ENCODE measurements at regions of chr12 and their contacts with region 1.

Region 1: DNA sequence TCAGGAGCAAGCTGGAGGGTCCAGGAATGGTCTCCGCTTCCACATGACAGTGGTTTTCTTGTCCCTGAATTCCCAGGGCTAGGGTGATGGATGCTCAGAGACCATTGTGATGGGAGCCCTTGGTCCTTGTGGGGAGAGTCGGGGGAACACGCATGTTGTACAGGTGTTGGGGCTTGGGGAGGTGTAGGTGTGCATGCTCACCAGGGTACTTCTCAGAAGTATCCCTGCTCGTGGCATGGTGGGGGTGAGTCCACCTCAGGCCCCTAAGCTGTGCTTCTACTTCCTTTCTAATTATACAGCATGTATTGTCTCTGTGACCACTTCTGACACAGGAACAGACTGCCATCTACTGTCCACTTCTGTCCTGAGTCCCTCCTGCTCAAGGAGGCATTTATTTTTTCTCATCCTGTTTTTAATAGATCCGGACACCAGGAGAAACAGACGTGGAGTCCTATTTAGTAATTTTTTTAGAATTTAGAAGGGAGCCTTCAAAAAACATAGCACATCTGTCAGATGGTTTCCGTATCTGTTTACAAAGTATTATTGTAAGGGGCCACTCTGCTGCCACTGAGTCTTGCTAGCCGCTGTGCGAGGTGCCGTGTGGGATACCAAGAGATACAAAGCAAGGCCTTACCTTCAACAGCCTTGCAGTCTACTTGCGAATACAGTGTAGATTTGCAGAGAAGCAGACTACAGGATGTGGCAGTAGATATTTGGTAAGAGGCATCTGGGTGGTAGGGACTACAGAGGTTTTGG is 10.5 kb downstream of the NTF3 start:
- DNase-seq: no peak
- ATAC-seq: peak; percentile 94

Region 2: GRCh38 chr12:5022465-5023061 is 419.9 kb before region 1 on chr12:
- intact Hi-C with region 1: loop called (anchors 5 kb)
- DNase-seq: no peak
- ATAC-seq: peak; percentile 83

Region 3: DNA sequence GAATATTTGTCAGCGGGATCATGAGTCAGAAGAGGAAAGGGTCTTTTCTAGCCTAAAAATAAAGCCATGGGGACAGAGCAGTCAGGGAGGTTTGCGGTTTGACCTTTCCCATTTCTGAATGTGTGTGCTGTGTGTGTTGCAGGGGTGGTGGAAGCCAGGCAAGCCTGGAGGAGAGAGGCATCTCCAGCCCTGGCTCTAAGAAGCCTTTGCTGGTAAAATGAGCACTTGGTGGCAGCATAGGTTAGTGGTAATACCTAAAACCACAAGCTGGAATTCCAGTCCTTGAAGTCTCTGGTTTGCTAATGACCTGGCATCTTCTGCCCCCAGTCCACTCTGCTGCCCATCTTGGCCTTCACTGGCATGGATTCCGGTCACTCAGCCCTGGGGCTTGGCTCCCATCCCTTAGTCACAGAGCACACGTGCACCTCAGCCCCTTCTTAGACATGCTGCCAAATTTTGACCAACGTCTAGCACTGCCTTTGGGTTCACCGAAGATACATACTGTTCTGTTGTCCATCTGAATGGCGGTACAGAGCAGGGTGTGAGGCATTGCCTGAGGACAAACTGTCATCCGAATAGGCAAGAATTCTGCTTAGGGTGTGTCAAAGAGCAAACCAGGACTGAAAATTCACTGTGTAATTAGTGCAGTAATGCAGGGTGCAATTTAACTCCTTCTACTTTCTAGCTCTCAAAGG is 346.0 kb before region 1 on chr12:
- intact Hi-C with region 1: loop called (anchors 5 kb)
- DNase-seq: no peak
- ATAC-seq: no peak

Region 4: DNA sequence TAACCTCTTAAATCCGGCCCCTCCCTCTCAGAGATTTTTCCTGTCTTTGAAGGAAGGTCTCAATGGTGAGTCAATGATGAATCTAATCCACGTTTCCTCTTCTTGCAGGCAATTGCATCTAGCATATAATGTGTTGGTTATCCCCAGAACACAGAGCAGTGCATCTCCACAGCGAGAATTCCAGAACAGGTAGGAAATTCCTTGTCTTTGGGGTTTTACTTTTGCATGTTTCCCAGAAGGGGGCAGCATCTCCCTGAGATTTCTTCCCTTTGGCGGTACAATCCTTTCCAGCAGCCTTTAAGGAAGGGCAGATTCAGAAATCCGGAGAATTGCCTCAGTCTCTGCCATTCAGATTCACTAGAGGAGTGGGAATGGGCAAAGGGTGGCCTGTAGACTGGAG is 270.7 kb before region 1 on chr12:
- intact Hi-C with region 1: loop called (anchors 2 kb)
- DNase-seq: no peak
- ATAC-seq: peak; percentile 46

Region 5: GRCh38 chr12:5200278-5201087 is 241.9 kb before region 1 on chr12:
- intact Hi-C with region 1: loop called (anchors 2 kb)
- DNase-seq: peak; percentile 72
- ATAC-seq: peak; percentile 79